ENCODE measurements at regions of chr19 and their contacts with region 1.

Region 1: DNA sequence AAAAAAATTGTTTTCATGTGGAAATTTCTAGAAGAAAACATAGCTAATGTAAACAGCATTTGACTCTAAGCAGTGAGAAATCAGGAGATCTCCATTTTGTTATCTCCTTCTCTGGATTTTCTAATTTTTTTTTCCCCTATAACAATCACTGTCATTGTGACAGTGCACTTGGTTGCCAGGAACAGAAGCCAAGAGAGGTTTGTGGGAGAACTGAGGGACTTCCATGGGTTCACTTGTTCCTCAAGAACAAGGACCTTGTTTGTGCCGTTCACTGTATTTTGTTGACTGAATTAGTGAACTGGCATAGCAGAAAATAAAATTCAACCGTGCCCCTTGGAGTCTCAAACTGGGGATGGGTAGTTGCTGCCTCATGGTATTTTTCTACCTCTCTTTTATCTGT is 17.1 kb downstream of the SHISA7 start:
- DNase-seq: no peak

Region 2: GRCh38 chr19:54239051-54239450 is 1187.0 kb before region 1 on chr19:
- intact Hi-C with region 1: loop called in 1 of 2 experiments (anchors 5 kb)
- DNase-seq: peak; percentile 67

Region 3: GRCh38 chr19:55368701-55369563 is 57.1 kb before region 1 on chr19:
- intact Hi-C with region 1: no loop called
- DNase-seq: no peak